ENCODE measurements at regions of chr5 and their contacts with region 1.

Region 1: DNA sequence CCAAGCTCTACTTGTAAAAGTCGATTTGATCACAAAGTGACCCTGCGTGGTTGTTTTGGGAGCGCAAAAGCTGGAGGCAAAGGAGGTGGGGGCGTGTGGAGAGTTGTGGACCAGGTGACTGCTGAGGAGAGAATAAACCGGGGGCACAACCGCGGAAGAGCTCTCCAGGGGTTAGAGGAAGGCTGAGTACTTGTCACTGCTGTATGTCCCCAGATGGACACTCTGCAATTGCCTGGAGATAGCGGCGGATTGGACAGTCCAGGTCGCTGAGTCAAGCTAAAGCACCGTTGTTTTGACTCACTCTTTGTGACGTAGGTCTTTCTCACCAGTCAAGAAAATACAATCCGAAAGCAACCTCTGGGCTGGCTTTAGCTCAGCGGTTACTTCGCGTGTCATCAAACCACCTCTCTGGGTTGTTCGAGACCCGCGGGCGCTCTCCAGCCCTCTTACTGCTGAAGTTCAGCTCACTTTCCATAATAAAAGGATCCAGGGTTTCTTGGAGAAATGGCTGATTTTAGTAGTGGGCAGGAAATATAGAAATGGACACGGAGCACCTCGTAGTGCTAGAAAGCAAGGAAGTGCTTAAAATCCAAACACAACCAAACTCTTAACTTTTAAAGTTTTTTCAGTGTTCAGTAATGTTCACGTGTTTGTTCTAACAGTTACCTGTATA is 25.7 kb downstream of the ZMAT2 start:
- DNase-seq: peak; percentile 89
- H3K4me3 Mint-ChIP-seq: peak overlapping the region; percentile 68
- H3K27ac Mint-ChIP-seq: peak overlapping the region; percentile 99
- H3K4me1 Mint-ChIP-seq: peaks cover 16% of the 10 kb centered on the region
- H3K27me3 Mint-ChIP-seq: no peaks in the 10 kb centered on the region
- CTCF ChIP-seq: no peak

Region 2: DNA sequence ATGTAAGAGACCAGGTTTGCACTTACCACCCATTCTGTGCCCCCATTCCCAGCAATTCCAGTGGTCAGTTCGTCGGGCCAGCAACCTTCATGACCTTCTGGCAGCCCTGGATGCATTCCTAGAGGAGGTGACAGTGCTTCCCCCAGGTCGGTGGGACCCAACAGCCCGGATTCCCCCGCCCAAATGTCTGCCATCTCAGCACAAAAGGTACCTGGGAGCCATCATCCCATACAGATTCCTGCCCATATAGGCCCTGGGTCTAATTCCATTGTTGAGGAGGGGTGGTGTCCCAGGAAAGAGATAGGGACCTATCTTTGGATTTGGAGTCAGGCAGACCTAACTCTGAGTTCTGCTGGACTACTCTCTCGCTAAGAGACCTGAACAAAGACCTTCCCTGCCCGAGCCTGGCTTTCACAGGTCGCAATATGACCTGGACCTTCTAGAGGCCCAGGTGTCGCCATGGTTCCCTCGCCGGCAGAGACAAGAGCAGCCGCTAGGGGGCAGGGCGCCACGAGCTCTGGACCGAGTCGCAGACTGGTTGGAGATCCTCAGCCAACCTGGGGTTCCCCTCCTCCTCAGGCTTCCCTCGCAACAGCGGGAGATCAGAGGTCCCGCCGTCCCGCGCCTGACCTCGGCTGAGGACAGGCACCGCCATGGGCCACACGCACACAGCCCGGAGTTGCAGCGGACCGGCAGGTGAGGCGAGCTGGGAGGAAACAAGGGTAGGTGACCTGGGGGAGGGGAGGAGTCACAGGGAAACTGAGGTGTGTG is 362.9 kb before region 1 on chr5:
- CTCF ChIA-PET with region 1: no interaction called
- intact Hi-C with region 1: loop called (anchors 5 kb)
- DNase-seq: peak; percentile 95
- H3K4me3 Mint-ChIP-seq: peak overlapping the region; percentile 72
- H3K27ac Mint-ChIP-seq: peak overlapping the region; percentile 15
- H3K4me1 Mint-ChIP-seq: peaks cover 17% of the 10 kb centered on the region
- H3K27me3 Mint-ChIP-seq: no peaks in the 10 kb centered on the region
- CTCF ChIP-seq: peak; percentile 93

Region 3: DNA sequence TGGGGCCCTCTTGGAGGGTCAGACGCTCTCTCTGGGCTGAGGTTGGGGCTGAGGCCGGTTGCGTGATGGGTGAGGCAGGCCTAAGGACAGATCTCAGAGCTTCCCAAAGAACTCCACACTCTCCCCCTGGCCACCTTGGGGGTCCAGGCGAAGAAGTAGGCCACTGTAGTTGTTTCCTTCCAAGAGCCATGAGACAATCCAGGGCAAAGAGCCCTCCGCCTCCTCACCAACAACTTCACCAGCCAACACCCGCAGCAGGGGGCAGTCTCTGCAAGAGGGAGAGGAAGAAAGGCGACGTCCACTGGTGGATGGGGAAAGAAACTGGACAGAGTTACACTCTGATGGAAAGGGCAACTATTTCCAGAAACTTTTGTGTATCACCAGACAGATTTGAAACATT is 150.6 kb before region 1 on chr5:
- CTCF ChIA-PET with region 1: no interaction called
- intact Hi-C with region 1: loop called (anchors 10 kb)
- DNase-seq: peak; percentile 66
- H3K4me3 Mint-ChIP-seq: no peak overlapping the region
- H3K27ac Mint-ChIP-seq: no peak overlapping the region
- H3K4me1 Mint-ChIP-seq: peaks cover 18% of the 10 kb centered on the region
- H3K27me3 Mint-ChIP-seq: no peaks in the 10 kb centered on the region
- CTCF ChIP-seq: no peak

Region 4: GRCh38 chr5:140753561-140753960 is 27.6 kb after region 1 on chr5:
- CTCF ChIA-PET with region 1: no interaction called
- intact Hi-C with region 1: no loop called
- DNase-seq: no peak
- H3K4me3 Mint-ChIP-seq: no peak overlapping the region
- H3K27ac Mint-ChIP-seq: no peak overlapping the region
- H3K4me1 Mint-ChIP-seq: no peaks in the 10 kb centered on the region
- H3K27me3 Mint-ChIP-seq: no peaks in the 10 kb centered on the region
- CTCF ChIP-seq: no peak

Region 5: GRCh38 chr5:140946578-140946977 is 220.6 kb after region 1 on chr5:
- CTCF ChIA-PET with region 1: no interaction called
- intact Hi-C with region 1: no loop called
- DNase-seq: no peak
- H3K4me3 Mint-ChIP-seq: no peak overlapping the region
- H3K27ac Mint-ChIP-seq: no peak overlapping the region
- H3K4me1 Mint-ChIP-seq: peaks cover 8% of the 10 kb centered on the region
- H3K27me3 Mint-ChIP-seq: no peaks in the 10 kb centered on the region
- CTCF ChIP-seq: no peak